Posterior vena cava (tissue), 2 donors: ENCODE measurements at regions of chrX and their contacts with region 1.

Region 1: DNA sequence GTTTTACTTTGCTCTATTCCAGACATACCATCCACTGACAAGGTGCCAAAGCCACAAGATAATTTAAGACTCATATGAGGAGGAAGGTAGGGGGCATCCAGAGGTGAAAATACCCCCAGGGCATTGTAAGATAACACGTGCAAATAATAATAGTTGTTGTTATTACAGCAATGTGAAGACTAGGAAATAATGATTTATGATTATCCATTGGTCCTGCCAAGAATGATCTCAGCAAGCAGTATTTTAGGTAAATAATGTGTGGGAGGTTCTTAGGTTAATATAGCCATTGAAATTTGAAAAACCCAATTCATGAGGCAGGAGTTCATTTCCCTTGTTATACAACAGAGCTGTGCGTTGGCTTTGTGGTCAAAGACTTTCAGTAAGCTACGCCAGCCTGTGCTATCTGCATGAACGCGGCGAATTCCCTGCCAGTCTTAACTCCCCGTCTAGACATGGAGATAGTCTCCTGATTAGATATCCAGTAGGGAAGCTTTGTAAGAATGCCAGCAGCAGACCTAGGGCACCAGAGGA is 47.2 kb upstream of the MXRA5 start:
- DNase-seq: no peak

Region 2: GRCh38 chrX:3678328-3678727 is 284.7 kb after region 1 on chrX:
- intact Hi-C with region 1: loop called in 1 of 2 experiments (anchors 2 kb)
- DNase-seq: no peak